GM12878 (cell line): ENCODE measurements at regions of chr7 and their contacts with region 1.

Region 1: GRCh38 chr7:106176414-106177299 is 64.5 kb upstream of the SYPL1 start:
- DNase-seq: no peak
- ATAC-seq: peak; percentile 76
- H3K4me3 ChIP-seq: no peak overlapping the region
- H3K27ac ChIP-seq: no peak overlapping the region
- H3K4me1 ChIP-seq: peaks cover 12% of the 10 kb centered on the region
- H3K27me3 ChIP-seq: no peaks in the 10 kb centered on the region
- CTCF ChIP-seq: peak; percentile 95 to 98 (median 96)
- EP300 ChIP-seq: no peak
- POLR2A ChIP-seq: no peak
- RAD21 ChIP-seq: peak; percentile 96

Region 2: DNA sequence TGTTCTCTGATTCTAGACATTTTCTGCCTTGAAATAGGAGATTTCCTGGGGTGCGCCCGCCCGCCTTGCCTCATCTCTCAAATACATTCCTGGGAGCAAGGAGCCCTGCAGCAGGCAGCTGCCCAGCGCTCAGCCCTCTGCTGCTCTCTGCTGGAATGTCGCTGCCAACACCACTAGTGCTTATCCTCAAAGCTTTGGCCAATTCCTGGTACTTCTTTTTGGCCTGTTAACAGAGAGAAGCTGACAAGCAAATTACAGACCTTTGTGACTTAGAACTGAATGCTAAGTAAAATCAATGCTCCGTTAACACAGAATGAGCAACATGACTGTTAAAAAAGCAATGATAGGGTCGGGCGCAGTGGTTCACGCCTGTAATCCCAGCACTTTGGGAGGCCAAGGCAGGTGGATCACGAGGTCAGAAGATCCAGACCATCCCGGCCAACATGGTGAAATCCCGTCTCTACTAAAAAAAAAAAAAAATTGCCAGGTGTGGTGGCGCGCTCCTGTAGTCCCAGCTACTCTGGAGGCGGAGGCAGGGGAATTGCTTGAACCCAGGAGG is 22.7 kb before region 1 on chr7:
- CTCF ChIA-PET with region 1: interaction called, 28 read pairs
- POLR2A ChIA-PET with region 1: no interaction called
- RAD21 ChIA-PET with region 1: interaction called, 11 read pairs
- SMC1A ChIA-PET with region 1: interaction called, 142 read pairs
- in situ Hi-C with region 1: no loop called
- intact Hi-C with region 1: no loop called
- DNase-seq: peak; percentile 45
- ATAC-seq: peak; percentile 94
- H3K4me3 ChIP-seq: no peak overlapping the region
- H3K27ac ChIP-seq: no peak overlapping the region
- H3K4me1 ChIP-seq: peaks cover 26% of the 10 kb centered on the region
- H3K27me3 ChIP-seq: no peaks in the 10 kb centered on the region
- CTCF ChIP-seq: peak; percentile 94 to 97 (median 96)
- EP300 ChIP-seq: no peak
- POLR2A ChIP-seq: no peak
- RAD21 ChIP-seq: peak; percentile 99

Region 3: GRCh38 chr7:106279425-106280197 is 103.0 kb after region 1 on chr7:
- CTCF ChIA-PET with region 1: interaction called, 16 read pairs
- POLR2A ChIA-PET with region 1: interaction called, 11 read pairs
- RAD21 ChIA-PET with region 1: interaction called, 58 read pairs
- SMC1A ChIA-PET with region 1: interaction called, 43 read pairs
- in situ Hi-C with region 1: no loop called
- intact Hi-C with region 1: loop called (anchors 2 kb)
- DNase-seq: no peak
- ATAC-seq: peak; percentile 47
- H3K4me3 ChIP-seq: peak overlapping the region; percentile 16; the same call in 1 of the 2 replicates
- H3K27ac ChIP-seq: no peak overlapping the region
- H3K4me1 ChIP-seq: peaks cover 7% of the 10 kb centered on the region; the same call in 1 of the 2 replicates
- H3K27me3 ChIP-seq: no peaks in the 10 kb centered on the region
- CTCF ChIP-seq: no peak
- EP300 ChIP-seq: no peak
- POLR2A ChIP-seq: no peak
- RAD21 ChIP-seq: no peak

Region 4: DNA sequence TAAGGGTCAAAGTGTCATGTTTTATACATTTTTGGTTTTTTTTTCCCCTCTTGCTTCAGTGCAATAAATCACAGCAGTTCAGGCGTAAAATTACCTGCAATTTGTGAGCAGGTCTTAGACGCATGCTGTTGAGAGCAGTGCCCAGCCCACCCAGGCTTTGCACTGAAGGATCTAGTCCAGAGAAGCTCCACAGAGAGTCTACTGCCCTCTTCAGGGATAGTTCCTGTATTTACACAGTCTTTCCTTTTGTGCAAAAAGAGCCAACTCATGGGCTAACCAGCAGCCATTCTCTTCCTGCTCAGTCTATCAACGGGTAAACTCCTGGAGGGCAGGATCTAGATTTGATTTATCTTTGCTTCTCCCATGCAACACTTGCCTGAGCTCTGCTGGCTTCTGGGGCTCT is 190.4 kb after region 1 on chr7:
- CTCF ChIA-PET with region 1: interaction called, 113 read pairs
- POLR2A ChIA-PET with region 1: interaction called, 3 read pairs
- RAD21 ChIA-PET with region 1: interaction called, 82 read pairs
- SMC1A ChIA-PET with region 1: interaction called, 56 read pairs
- in situ Hi-C with region 1: no loop called
- intact Hi-C with region 1: loop called (anchors 1 kb)
- DNase-seq: no peak
- ATAC-seq: peak; percentile 80
- H3K4me3 ChIP-seq: no peak overlapping the region
- H3K27ac ChIP-seq: no peak overlapping the region
- H3K4me1 ChIP-seq: no peaks in the 10 kb centered on the region
- H3K27me3 ChIP-seq: no peaks in the 10 kb centered on the region
- CTCF ChIP-seq: peak; percentile 35 to 48 (median 41); a peak in 5 of 6 replicates
- EP300 ChIP-seq: no peak
- POLR2A ChIP-seq: no peak
- RAD21 ChIP-seq: peak; percentile 75

Region 5: GRCh38 chr7:106461993-106462859 is 285.6 kb after region 1 on chr7:
- CTCF ChIA-PET with region 1: interaction called, 530 read pairs
- POLR2A ChIA-PET with region 1: interaction called, 15 read pairs
- RAD21 ChIA-PET with region 1: interaction called, 311 read pairs
- SMC1A ChIA-PET with region 1: interaction called, 390 read pairs
- in situ Hi-C with region 1: loop called (anchors 5 kb)
- intact Hi-C with region 1: loop called (anchors 1 kb)
- DNase-seq: peak; percentile 39
- ATAC-seq: peak; percentile 83
- H3K4me3 ChIP-seq: no peak overlapping the region
- H3K27ac ChIP-seq: no peak overlapping the region
- H3K4me1 ChIP-seq: peaks cover 12% of the 10 kb centered on the region
- H3K27me3 ChIP-seq: no peaks in the 10 kb centered on the region
- CTCF ChIP-seq: peak; percentile 40 to 56 (median 47); a peak in 5 of 6 replicates
- EP300 ChIP-seq: no peak
- POLR2A ChIP-seq: no peak
- RAD21 ChIP-seq: peak; percentile 79

Region 6: GRCh38 chr7:106659963-106660861 is 483.6 kb after region 1 on chr7:
- CTCF ChIA-PET with region 1: interaction called, 22 read pairs
- POLR2A ChIA-PET with region 1: no interaction called
- RAD21 ChIA-PET with region 1: interaction called, 12 read pairs
- SMC1A ChIA-PET with region 1: interaction called, 5 read pairs
- in situ Hi-C with region 1: loop called (anchors 5 kb)
- intact Hi-C with region 1: loop called (anchors 2 kb)
- DNase-seq: peak; percentile 51
- ATAC-seq: peak; percentile 79
- H3K4me3 ChIP-seq: peak overlapping the region; percentile 96
- H3K27ac ChIP-seq: peak overlapping the region; percentile 72
- H3K4me1 ChIP-seq: peaks cover 9% of the 10 kb centered on the region; the same call in 1 of the 2 replicates
- H3K27me3 ChIP-seq: no peaks in the 10 kb centered on the region; a peak in 1 of 4 replicates
- CTCF ChIP-seq: peak; percentile 78 to 94 (median 89)
- EP300 ChIP-seq: 0 out of 4 replicates have a peak, but pooled peaks of 1 of the 2 experiments have one; percentile 37
- POLR2A ChIP-seq: peak; percentile 78
- RAD21 ChIP-seq: peak; percentile 76